ENCODE measurements at regions of chr4 and their contacts with region 1.

Region 1: DNA sequence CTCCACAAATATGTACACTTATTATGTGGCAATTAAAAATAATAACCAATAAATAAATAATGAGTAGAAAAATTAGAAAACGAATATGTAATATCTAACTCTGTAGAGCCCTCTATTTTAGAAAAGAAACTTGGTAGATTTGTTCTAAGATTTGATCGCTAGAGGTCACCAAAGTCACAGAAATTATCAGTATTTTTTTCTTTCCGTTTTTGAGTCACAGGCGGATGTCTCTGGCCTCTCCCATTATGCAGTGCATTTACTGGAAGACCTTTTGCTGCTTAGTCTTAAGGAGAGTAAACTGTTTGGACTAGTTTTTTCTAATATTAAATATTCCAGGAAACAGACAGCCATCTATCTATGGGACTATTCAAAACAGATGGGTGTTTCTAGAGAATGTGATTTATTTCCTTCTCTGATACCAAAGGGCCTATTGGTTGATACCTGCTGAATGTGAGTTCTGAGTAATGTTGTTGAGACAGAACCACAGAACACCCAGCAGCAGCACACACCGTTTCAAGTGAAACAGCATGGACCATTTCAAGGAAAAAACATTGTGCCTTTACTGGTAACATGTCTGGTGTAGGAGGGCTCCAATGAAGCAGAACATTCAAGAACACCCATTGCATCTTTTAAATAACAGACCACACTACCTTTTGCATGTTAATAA is 34.0 kb upstream of the GYPA start:
- DNase-seq: no peak
- H3K4me3 ChIP-seq: no peak overlapping the region
- H3K27ac ChIP-seq: no peak overlapping the region
- H3K4me1 ChIP-seq: no peaks in the 10 kb centered on the region
- H3K27me3 ChIP-seq: no peaks in the 10 kb centered on the region
- CTCF ChIP-seq: peak; percentile 39

Region 2: GRCh38 chr4:144787365-144788258 is 613.1 kb after region 1 on chr4:
- intact Hi-C with region 1: loop called (anchors 5 kb)
- DNase-seq: no peak
- H3K4me3 ChIP-seq: no peak overlapping the region
- H3K27ac ChIP-seq: no peak overlapping the region
- H3K4me1 ChIP-seq: no peaks in the 10 kb centered on the region
- H3K27me3 ChIP-seq: no peaks in the 10 kb centered on the region
- CTCF ChIP-seq: peak; percentile 36

Region 3: GRCh38 chr4:145061318-145061920 is 886.9 kb after region 1 on chr4:
- intact Hi-C with region 1: loop called (anchors 5 kb)
- DNase-seq: no peak
- H3K4me3 ChIP-seq: no peak overlapping the region
- H3K27ac ChIP-seq: no peak overlapping the region
- H3K4me1 ChIP-seq: no peaks in the 10 kb centered on the region
- H3K27me3 ChIP-seq: no peaks in the 10 kb centered on the region
- CTCF ChIP-seq: no peak